OCI-LY7 (cell line): ENCODE measurements at regions of chr7 and their contacts with region 1.

Region 1: GRCh38 chr7:66654123-66654732 is 25.5 kb downstream of the KCTD7 start:
- DNase-seq: peak; percentile 99
- H3K4me3 ChIP-seq: peak overlapping the region; percentile 71
- H3K27ac ChIP-seq: peak overlapping the region; percentile 80
- H3K4me1 ChIP-seq: peaks cover 7% of the 10 kb centered on the region
- CTCF ChIP-seq: 0 out of 2 replicates have a peak, but pooled peaks have one; percentile 40

Region 2: DNA sequence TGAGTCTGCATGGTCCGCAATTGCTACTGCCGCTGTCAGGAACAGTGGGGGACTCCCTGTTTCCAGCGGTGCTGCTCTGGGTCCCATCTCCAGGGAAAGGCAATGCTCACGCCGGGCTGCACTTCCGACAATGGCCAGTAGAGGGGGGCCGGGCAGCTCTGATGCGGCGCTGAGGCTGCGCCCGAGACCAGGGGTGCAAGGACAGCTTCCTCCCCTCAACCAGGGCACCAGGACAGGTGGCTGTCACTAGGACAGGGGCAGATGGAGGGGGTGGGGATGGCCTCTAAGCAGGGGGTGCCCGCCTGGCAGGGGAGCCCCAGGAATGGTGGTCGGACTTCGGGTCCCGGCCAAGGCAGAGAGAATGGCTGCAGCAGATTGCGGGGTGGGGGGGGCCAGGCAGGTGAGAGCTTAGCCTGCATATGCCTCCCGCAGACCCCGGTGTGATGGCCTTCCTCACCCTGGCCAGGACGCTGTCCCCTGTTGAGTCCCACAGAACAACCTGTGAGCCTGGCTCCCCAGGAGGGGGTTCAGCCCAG is 96.6 kb before region 1 on chr7:
- CTCF ChIA-PET with region 1: no interaction called
- POLR2A ChIA-PET with region 1: interaction called, 5 read pairs
- intact Hi-C with region 1: loop called (anchors 5 kb)
- DNase-seq: peak; percentile 58
- H3K4me3 ChIP-seq: no peak overlapping the region
- H3K27ac ChIP-seq: no peak overlapping the region
- H3K4me1 ChIP-seq: no peaks in the 10 kb centered on the region
- CTCF ChIP-seq: peak; percentile 88